HepG2 (cell line): ENCODE measurements at regions of chr6 and their contacts with region 1.

Region 1: DNA sequence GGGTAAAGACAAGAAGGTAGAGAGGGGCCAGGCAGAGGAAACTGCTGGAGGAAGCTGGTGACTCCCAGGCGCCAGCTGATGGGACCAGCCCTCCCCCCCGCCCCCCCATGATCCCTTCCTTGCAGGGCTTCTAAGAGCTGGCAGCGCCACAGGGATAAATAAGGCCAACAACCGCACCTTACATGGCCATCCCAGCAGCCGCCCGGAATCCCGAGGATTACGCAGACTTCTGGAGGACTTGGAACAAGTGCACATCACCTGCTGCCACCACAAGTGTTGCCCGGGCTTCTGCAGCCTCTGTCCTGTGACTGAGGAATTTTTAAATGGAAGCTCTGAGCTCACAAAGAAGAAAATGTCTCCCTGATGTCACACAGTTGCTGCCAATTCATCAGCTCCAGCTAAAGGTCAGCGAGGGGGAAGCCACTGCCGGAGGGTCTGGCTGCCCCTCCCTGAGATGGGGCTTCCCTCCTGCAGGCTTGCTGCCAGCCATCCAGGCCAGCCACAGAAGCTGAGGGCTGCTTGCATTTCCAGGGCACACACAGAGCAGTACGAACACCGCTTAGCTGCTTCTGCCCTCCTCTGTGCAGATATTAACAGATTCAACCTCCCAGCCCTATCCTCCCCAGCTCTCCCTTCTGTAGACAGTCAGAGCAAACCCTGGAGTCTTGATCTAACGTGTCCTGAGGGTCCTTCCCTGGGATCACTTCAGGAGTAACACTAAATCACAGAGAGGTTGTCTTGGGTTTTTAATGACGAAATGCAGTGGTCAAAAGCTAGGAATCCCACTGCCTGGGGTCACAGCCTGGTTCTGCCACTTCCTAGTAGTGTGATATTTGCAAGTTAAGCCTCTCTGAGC is 38.6 kb upstream of the PIM1 start:
- DNase-seq: peak; percentile 68
- ATAC-seq: peak; percentile 57
- H3K4me3 ChIP-seq: peak overlapping the region; percentile 39 to 68 (median 52)
- H3K27ac ChIP-seq: peak overlapping the region; percentile 95
- H3K4me1 ChIP-seq: peaks cover 90% of the 10 kb centered on the region
- H3K27me3 ChIP-seq: no peaks in the 10 kb centered on the region
- CTCF ChIP-seq: peak; percentile 42; the same call in 1 of the 2 replicates
- EP300 ChIP-seq: no peak
- POLR2A ChIP-seq: peak in 1 of 2 experiments; percentile 15; a peak in 1 of 4 replicates
- RAD21 ChIP-seq: peak; percentile 38

Region 2: GRCh38 chr6:37051138-37052026 is 80.0 kb before region 1 on chr6:
- CTCF ChIA-PET with region 1: no interaction called
- POLR2A ChIA-PET with region 1: interaction called, 17 read pairs
- in situ Hi-C with region 1: no loop called
- intact Hi-C with region 1: loop called (anchors 5 kb)
- DNase-seq: peak; percentile 70
- ATAC-seq: peak; percentile 82
- H3K4me3 ChIP-seq: peak overlapping the region in 2 of 3 experiments; percentile 12 to 64; a peak in 3 of 6 replicates
- H3K27ac ChIP-seq: no peak overlapping the region
- H3K4me1 ChIP-seq: peaks cover 78% of the 10 kb centered on the region
- H3K27me3 ChIP-seq: peaks cover 2 to 17% of the 10 kb centered on the region in 2 experiments; a peak in 4 of 5 replicates
- CTCF ChIP-seq: peak; percentile 100
- EP300 ChIP-seq: no peak
- POLR2A ChIP-seq: no peak
- RAD21 ChIP-seq: peak; percentile 100

Region 3: DNA sequence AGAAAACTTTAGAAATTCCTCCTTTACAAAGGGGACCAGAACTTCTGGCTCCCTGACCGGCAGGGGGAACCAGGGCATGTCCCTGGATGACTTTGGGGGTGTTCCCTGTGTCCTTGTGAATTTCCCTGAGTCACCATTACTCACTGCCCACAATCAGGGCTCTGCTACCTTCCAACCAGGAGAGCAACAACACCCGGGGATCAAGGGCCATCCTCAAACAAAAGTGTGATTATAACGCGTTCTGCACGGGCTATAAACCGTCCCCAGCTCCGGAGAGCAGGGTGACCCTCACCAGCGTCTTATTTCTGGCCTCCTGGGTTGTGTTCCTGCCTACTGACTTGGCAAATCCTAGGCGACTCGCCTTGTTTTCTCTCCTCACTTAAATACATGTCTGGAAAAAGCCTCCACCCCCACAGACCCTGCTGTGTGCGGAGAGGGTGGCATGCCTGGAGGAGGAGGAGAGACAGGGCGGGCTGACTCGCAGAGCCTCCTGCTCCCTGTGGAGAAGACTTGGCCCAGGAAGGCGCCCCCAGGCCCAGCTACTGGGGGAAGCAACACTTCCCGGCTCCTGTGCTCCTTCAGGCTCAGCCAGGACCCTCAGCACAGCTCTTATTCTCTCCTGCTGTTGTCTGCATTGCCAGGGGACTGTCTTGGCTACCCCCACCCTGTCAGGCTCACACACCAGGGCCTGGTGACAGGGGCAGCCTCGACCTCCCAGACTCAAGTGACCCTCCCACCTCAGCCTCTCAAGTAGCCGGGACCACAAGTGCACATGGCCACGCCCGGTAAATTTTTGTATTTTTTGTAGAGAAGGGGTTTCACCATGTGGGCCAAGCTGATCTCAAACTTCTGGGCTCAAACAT is 71.8 kb before region 1 on chr6:
- CTCF ChIA-PET with region 1: no interaction called
- POLR2A ChIA-PET with region 1: interaction called, 30 read pairs
- in situ Hi-C with region 1: no loop called
- intact Hi-C with region 1: loop called (anchors 5 kb)
- DNase-seq: peak; percentile 99
- ATAC-seq: peak; percentile 91
- H3K4me3 ChIP-seq: peak overlapping the region; percentile 32 to 67 (median 44); a peak in 5 of 6 replicates
- H3K27ac ChIP-seq: peak overlapping the region; percentile 97
- H3K4me1 ChIP-seq: peaks cover 76% of the 10 kb centered on the region
- H3K27me3 ChIP-seq: no peaks in the 10 kb centered on the region
- CTCF ChIP-seq: peak; percentile 92
- EP300 ChIP-seq: peak; percentile 89 to 96; a peak in 3 of 4 replicates
- POLR2A ChIP-seq: peak in 1 of 2 experiments; percentile 85; a peak in 2 of 4 replicates
- RAD21 ChIP-seq: peak; percentile 96

Region 4: DNA sequence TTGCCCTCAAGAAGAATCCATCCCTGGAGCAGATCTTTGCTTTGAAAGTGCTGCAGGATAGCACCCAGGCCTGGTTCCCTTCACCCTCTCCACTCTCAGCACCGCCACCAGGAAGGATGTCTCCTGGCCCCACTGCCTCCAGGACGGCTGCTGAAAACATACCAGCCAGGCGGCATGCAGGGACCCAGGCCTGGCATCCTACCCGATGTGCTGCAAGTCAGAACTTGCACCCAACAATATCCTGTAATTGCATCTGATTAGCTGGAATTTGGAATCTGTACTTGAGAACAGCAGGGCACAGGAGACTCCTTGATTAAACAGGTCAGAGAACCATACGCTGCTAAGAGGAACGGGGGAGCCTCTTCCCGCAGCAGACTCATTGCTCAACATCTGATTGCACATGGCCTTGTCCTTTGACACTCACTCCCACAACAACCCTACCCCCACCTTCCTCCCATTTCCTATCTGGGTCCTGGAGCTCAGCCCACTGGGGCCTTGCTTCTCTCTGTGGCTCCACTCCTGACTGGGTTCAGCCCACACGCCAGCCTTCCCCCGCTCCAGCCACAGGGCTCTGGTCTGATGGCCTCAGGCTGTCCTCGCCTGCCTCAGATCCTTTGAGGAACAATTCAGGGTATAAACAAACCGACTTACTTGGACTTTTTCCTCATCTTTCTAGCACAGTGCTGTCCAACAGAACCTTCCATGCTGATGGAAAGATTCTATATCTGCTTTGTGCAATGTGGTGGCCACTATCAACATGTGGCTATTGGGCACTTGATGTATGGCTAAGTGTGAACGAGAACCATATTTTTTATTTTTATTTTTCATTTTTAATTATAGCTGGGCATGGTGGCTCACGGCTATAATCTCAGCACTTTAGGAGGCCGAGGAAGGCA is 47.8 kb before region 1 on chr6:
- CTCF ChIA-PET with region 1: no interaction called
- POLR2A ChIA-PET with region 1: interaction called, 19 read pairs
- in situ Hi-C with region 1: no loop called
- intact Hi-C with region 1: no loop called
- DNase-seq: peak; percentile 96
- ATAC-seq: peak; percentile 96
- H3K4me3 ChIP-seq: peak overlapping the region; percentile 3 to 57 (median 15); a peak in 2 of 6 replicates
- H3K27ac ChIP-seq: peak overlapping the region; percentile 74
- H3K4me1 ChIP-seq: peaks cover 76% of the 10 kb centered on the region
- H3K27me3 ChIP-seq: no peaks in the 10 kb centered on the region
- CTCF ChIP-seq: peak; percentile 49
- EP300 ChIP-seq: peak; percentile 95 to 98
- POLR2A ChIP-seq: peak; percentile 33 to 50; a peak in 1 of 4 replicates
- RAD21 ChIP-seq: peak; percentile 66

Region 5: DNA sequence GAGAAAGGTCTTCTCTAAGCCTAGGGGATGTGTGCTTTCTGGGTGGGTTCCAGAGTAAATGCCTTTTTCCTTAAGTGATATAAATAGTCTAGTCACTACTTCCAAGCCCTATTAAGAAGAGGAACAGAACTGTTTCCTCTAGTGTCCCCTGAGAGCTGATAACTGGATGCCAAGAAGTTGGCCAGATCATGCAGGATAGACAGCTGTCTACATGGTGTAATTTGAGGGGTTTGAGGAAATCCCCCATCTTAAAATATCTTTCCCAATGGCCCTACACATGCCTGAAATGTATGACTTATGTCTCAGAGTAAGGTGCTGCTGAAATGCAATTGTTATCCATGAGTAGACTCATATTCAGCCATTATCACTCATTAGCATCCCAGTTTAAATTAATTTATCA is 18.4 kb after region 1 on chr6:
- CTCF ChIA-PET with region 1: no interaction called
- POLR2A ChIA-PET with region 1: interaction called, 55 read pairs
- in situ Hi-C with region 1: no loop called
- intact Hi-C with region 1: no loop called
- DNase-seq: no peak
- ATAC-seq: no peak
- H3K4me3 ChIP-seq: no peak overlapping the region
- H3K27ac ChIP-seq: no peak overlapping the region
- H3K4me1 ChIP-seq: peaks cover 84% of the 10 kb centered on the region
- H3K27me3 ChIP-seq: no peaks in the 10 kb centered on the region
- CTCF ChIP-seq: no peak
- EP300 ChIP-seq: no peak
- POLR2A ChIP-seq: no peak
- RAD21 ChIP-seq: no peak